CD4-positive, alpha-beta memory T cell (primary cell): ENCODE measurements at regions of chr3 and their contacts with region 1.

Region 1: DNA sequence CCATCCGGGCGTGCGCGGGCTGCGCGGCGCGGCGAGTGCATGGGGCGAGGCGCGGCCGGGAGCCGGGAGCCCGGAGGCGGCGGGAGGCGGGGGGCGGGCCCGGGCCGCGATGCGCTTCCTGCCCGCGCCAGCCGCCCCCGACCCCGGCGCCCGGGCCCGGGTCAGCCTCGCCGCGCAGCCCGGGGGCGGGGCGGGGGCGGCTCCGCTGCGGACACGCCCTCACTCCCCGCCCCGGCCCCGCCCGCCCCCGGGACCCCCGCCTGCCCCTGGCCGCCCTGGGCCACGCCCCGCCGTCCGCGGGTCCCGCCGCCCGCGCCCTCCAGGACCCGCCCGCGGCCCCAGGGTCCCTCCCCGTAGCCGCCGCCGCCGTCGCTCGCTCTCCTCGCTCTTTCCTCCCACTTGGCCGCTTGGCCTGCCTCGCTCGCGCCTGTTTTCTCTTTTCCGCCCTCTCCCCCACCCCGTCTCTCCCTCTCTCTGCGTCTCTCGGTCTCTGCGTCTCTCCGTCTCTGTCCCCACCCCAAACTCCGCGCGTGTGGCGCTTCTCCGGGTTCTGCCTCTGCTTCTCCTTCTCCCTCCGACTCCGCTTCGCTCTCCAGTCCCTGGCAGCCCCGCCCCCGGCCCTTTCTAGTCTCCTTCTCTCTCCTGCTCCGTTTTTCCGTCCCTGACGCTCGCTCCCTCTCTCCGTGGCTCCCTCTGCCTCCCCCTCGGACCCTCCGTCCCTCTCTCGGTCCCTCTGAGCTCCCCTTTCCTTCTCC is at the start of gene PLXND1:
- DNase-seq: peak in 4 of 5 donors; percentile 36 to 55 (median 46)
- H3K4me3 ChIP-seq: peak within 1 kb of the TSS in 1 of 2 donors; percentile 62
- H3K4me3 Mint-ChIP-seq: peak within 1 kb of the TSS; percentile 91 to 99 (median 95)
- H3K27ac ChIP-seq: no peak within 1 kb of the TSS
- H3K27ac Mint-ChIP-seq: peak within 1 kb of the TSS; percentile 81 to 99 (median 93)
- H3K4me1 ChIP-seq: peaks cover 28% of the 10 kb centered on the region
- H3K4me1 Mint-ChIP-seq: peaks cover 21 to 50% (median 32%) of the 10 kb centered on the region in 4 donors
- H3K27me3 ChIP-seq: no peaks in the 10 kb centered on the region
- H3K27me3 Mint-ChIP-seq: peaks cover 2 to 4% of the 10 kb centered on the region in 2 donors
- total RNA-seq, gene PLXND1: 71.4 to 72.5 TPM

Region 2: DNA sequence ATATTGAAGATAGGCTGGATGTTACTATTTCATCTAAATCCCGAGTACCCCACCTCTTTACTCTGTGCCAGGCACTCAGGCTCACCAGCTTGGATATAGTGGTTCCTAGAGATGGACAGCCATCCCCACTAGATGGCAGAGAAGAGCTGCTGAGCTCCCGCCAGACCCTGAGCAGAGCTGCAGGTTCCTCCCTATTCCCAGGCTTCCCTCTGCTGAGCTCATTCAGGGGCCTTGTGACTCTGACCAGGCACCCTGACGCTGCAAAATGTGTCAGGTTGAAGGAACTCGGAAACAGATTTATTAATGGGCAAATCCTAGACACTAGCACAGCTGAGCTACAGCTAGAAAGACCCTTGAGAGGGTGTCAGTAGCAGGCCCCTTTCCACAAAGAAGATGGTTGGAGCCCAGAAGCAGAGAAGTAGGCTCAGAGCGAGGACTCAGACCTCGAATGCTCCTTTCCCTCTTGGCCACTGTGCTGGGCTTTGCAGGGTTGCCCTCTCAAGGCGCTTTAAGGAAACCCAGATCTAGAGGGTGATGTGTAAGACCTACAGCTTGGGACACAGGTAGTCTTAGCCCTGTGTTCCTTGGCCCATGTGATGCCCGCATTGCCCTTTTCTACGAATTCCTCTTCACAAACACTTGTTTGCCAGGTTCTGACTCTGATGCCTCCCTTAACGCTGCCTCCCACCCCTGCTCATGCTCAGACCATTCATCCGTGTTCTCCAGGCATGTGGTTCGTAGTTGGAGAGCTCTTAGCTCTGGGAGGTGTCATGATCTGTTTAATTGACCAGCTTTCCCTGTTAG is 116.4 kb before region 1 on chr3:
- CTCF ChIA-PET with region 1: interaction called, 19 read pairs
- POLR2A ChIA-PET with region 1: interaction called, 5 read pairs
- intact Hi-C with region 1: loop called (anchors 1 kb)
- DNase-seq: peak in 4 of 5 donors; percentile 48 to 61 (median 56)
- H3K4me3 ChIP-seq: no peak overlapping the region
- H3K4me3 Mint-ChIP-seq: no peak overlapping the region
- H3K27ac ChIP-seq: no peak overlapping the region
- H3K27ac Mint-ChIP-seq: peak overlapping the region in 4 of 7 donors; percentile 30 to 55 (median 46)
- H3K4me1 ChIP-seq: no peaks in the 10 kb centered on the region
- H3K4me1 Mint-ChIP-seq: peaks cover 0 to 4% (median 0%) of the 10 kb centered on the region in 4 donors
- H3K27me3 ChIP-seq: no peaks in the 10 kb centered on the region
- H3K27me3 Mint-ChIP-seq: no peaks in the 10 kb centered on the region

Region 3: DNA sequence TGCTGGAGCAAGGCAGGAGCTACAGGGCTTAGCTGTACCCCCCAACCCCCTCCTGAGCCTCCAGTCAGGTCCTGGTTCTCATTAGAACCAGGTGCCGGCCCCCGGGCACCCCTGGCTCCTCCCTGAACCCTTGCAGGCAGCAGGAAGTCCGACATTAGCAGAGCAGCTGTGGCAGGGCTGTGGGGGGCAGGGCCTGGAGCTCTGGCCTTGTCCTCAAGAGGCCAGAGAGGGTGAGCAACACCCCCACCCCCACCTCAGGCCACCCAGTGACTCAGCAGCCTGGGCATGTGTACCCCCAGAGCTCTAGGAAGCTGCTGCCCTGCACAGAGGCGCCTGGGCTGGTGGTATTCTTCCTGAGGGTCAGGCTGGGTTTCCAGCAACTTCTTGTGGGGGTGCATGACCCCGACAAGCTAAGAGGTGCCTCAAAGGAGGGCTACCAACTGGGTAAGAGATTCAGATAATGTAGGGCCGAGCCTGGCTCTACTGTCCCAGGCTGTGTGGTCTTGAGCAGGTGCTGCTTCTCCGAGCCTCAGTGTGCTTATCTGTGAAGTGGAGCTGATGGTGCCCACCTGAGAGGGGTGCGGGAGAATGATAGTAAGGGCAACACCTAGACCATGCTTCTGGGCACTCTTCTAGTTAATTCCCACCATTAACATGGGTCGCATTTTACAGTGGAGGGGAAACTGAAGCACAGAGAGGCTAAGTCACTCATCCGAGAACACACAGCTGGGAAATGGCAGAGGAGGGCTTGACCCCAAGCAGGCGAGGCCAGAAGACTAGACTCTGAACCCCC is 47.8 kb before region 1 on chr3:
- CTCF ChIA-PET with region 1: no interaction called
- POLR2A ChIA-PET with region 1: interaction called, 12 read pairs
- intact Hi-C with region 1: loop called (anchors 10 kb)
- DNase-seq: no peak
- H3K4me3 ChIP-seq: no peak overlapping the region
- H3K4me3 Mint-ChIP-seq: no peak overlapping the region
- H3K27ac ChIP-seq: no peak overlapping the region
- H3K27ac Mint-ChIP-seq: peak overlapping the region in 3 of 7 donors; percentile 29 to 85 (median 50)
- H3K4me1 ChIP-seq: peaks cover 7% of the 10 kb centered on the region
- H3K4me1 Mint-ChIP-seq: peaks cover 5 to 24% (median 12%) of the 10 kb centered on the region in 4 donors
- H3K27me3 ChIP-seq: no peaks in the 10 kb centered on the region
- H3K27me3 Mint-ChIP-seq: peaks cover 0 to 1% of the 10 kb centered on the region in 2 donors

Region 4: DNA sequence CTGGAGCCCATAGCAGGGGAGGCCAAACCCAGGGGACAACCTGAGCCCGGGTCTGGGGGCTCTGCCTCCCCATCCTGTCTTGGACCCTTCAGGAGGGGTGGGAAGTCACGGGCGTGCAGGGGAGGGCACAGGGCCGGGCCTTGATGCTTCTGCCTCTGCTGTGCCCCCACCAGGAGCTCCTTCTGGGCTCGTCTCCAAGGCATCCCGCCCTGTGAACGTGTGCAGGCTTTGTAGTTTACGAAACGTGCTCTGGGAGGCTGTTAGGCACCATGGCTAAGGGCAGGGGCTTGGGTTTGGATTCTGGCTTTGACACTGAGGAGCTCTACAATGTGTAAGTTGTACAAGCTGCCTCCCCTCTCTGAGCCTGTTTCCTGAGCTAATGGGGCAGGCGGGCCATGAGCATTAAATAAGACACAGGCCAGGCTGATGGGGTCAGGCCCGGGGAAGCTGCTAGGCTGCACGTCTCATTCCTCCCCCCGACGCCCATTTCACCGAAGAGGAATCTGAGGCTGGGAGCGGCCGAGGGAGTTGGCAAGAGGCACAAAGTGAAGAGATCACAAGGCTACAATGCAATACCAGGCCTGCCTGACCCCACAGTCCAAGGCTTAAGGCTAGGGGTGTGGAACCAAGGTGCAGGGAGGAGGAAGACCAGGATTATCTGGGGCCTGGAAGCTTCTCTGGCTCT is 19.9 kb before region 1 on chr3:
- CTCF ChIA-PET with region 1: interaction called, 13 read pairs
- POLR2A ChIA-PET with region 1: interaction called, 83 read pairs
- intact Hi-C with region 1: no loop called
- DNase-seq: no peak
- H3K4me3 ChIP-seq: no peak overlapping the region
- H3K4me3 Mint-ChIP-seq: no peak overlapping the region
- H3K27ac ChIP-seq: no peak overlapping the region
- H3K27ac Mint-ChIP-seq: peak overlapping the region in 3 of 7 donors; percentile 2 to 13 (median 5)
- H3K4me1 ChIP-seq: no peaks in the 10 kb centered on the region
- H3K4me1 Mint-ChIP-seq: peaks cover under 1 to 9% (median 4%) of the 10 kb centered on the region in 4 donors
- H3K27me3 ChIP-seq: no peaks in the 10 kb centered on the region
- H3K27me3 Mint-ChIP-seq: no peaks in the 10 kb centered on the region

Region 5: GRCh38 chr3:129893581-129894070 is 286.8 kb after region 1 on chr3 and contains the start of gene TMCC1:
- CTCF ChIA-PET with region 1: no interaction called
- POLR2A ChIA-PET with region 1: no interaction called
- intact Hi-C with region 1: loop called (anchors 1 kb)
- DNase-seq: peak; percentile 90 to 94 (median 92)
- H3K4me3 ChIP-seq: peak within 1 kb of the TSS; percentile 87 to 96
- H3K4me3 Mint-ChIP-seq: peak within 1 kb of the TSS; percentile 88 to 96 (median 92)
- H3K27ac ChIP-seq: peak within 1 kb of the TSS; percentile 82
- H3K27ac Mint-ChIP-seq: peak within 1 kb of the TSS; percentile 92 to 97 (median 93)
- H3K4me1 ChIP-seq: peaks cover 46% of the 10 kb centered on the region
- H3K4me1 Mint-ChIP-seq: peaks cover 23 to 47% (median 37%) of the 10 kb centered on the region in 4 donors
- H3K27me3 ChIP-seq: no peaks in the 10 kb centered on the region
- H3K27me3 Mint-ChIP-seq: peaks cover 0 to 1% of the 10 kb centered on the region in 2 donors
- total RNA-seq, gene TMCC1: 36.4 to 39.3 TPM